ENCODE measurements at regions of chr17 and their contacts with region 1.

Region 1: GRCh38 chr17:48869821-48870318 is 22.7 kb upstream of the ATP5MC1 start:
- DNase-seq: no peak
- H3K4me3 ChIP-seq: no peak overlapping the region
- H3K27ac ChIP-seq: no peak overlapping the region
- H3K4me1 ChIP-seq: no peaks in the 10 kb centered on the region
- H3K27me3 ChIP-seq: no peaks in the 10 kb centered on the region
- CTCF ChIP-seq: no peak

Region 2: GRCh38 chr17:48738803-48739526 is 130.9 kb before region 1 on chr17:
- CTCF ChIA-PET with region 1: no interaction called
- dilution Hi-C with region 1: loop called (anchors 5 kb)
- in situ Hi-C with region 1: no loop called
- intact Hi-C with region 1: no loop called
- DNase-seq: no peak
- H3K4me3 ChIP-seq: no peak overlapping the region
- H3K27ac ChIP-seq: no peak overlapping the region
- H3K4me1 ChIP-seq: no peaks in the 10 kb centered on the region
- H3K27me3 ChIP-seq: peaks cover 51% of the 10 kb centered on the region
- CTCF ChIP-seq: no peak

Measured in mammary epithelial cell (primary cell).